Aorta (tissue), 5 donors: ENCODE measurements at regions of chr3 and their contacts with region 1.

Region 1: GRCh38 chr3:195522254-195523023 is 20.7 kb downstream of the PPP1R2 start:
- DNase-seq: no peak
- ATAC-seq: no peak
- H3K4me3 ChIP-seq: no peak overlapping the region
- H3K27ac ChIP-seq: no peak overlapping the region
- H3K4me1 ChIP-seq: no peaks in the 10 kb centered on the region
- H3K27me3 ChIP-seq: no peaks in the 10 kb centered on the region

Region 2: GRCh38 chr3:194671900-194672808 is 850.3 kb before region 1 on chr3 and contains the start of gene LSG1:
- intact Hi-C with region 1: loop called in 1 of 2 experiments (anchors 10 kb)
- DNase-seq: peak; percentile 96
- ATAC-seq: peak; percentile 98
- H3K4me3 ChIP-seq: peak within 1 kb of the TSS; percentile 95 to 99
- H3K27ac ChIP-seq: peak within 1 kb of the TSS; percentile 50 to 93
- H3K4me1 ChIP-seq: no peaks in the 10 kb centered on the region
- H3K27me3 ChIP-seq: no peaks in the 10 kb centered on the region
- total RNA-seq, gene LSG1: 27.2 to 31.3 TPM

Region 3: DNA sequence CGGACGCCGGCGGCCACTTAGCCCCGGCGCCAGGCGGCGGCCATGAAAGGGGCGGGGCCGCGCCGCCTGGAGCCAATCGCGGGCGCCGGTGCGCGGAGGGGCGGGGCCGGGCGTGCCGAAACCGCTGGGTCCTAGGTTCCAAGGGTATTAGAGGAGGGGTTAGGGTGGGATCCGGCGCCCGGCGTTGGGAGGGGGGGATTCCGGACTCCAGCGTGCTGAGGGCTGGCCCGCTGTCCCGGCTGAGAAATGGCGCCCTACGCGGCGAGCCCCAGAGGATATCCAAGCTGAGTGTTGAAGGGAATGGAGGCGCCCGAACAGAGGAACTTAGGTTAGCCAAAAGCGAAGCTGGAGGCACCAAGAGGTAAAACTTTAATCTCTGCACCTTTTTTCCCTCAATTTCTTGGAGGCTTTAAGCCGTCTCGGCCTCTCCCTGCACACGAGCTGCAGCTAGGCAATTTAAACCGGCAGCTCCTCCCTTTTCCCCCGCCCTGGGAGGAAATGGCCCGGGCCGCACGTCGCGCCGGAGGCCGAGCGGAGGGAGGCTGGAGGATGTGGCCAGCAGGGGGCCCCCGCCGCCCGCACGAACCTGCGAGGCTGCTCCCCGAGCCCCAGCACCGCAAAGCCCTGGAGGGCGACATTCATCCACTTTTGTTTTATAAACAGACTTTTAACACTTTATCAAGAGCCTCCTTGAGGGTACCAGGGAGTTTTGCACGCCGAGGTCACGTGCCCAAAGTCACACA is 251.2 kb before region 1 on chr3 and contains the start of gene XXYLT1:
- intact Hi-C with region 1: loop called (anchors 1 to 2 kb)
- DNase-seq: peak; percentile 93 to 96
- ATAC-seq: peak; percentile 98
- H3K4me3 ChIP-seq: peak within 1 kb of the TSS; percentile 58 to 75
- H3K27ac ChIP-seq: peak within 1 kb of the TSS in 1 of 2 donors; percentile 21
- H3K4me1 ChIP-seq: no peaks in the 10 kb centered on the region
- H3K27me3 ChIP-seq: no peaks in the 10 kb centered on the region
- total RNA-seq, gene XXYLT1: 8.6 to 15.0 TPM

Region 4: GRCh38 chr3:195580744-195581443 is 58.5 kb after region 1 on chr3:
- intact Hi-C with region 1: no loop called
- DNase-seq: no peak
- ATAC-seq: no peak
- H3K4me3 ChIP-seq: no peak overlapping the region
- H3K27ac ChIP-seq: no peak overlapping the region
- H3K4me1 ChIP-seq: no peaks in the 10 kb centered on the region
- H3K27me3 ChIP-seq: no peaks in the 10 kb centered on the region